ENCODE measurements at regions of chr6 and their contacts with region 1.

Region 1: GRCh38 chr6:108294727-108295625 is at the start of gene AFG1L:
- DNase-seq: peak; percentile 89 to 99 (median 97)

Region 2: GRCh38 chr6:108260809-108261569 is 34.0 kb before region 1 on chr6 and contains the start of gene SNX3:
- intact Hi-C with region 1: loop called (anchors 2 kb)
- DNase-seq: peak; percentile 74 to 97 (median 92)